ENCODE measurements at regions of chr18 and their contacts with region 1.

Region 1: GRCh38 chr18:48445540-48445939 is 36.4 kb upstream of the ZBTB7C start:
- H3K4me3 ChIP-seq: no peak overlapping the region
- H3K27ac ChIP-seq: no peak overlapping the region
- H3K4me1 ChIP-seq: no peaks in the 10 kb centered on the region; the same call in 1 of the 2 replicates
- CTCF ChIP-seq: peak; percentile 71

Region 2: GRCh38 chr18:48022531-48023329 is 422.8 kb before region 1 on chr18:
- CTCF ChIA-PET with region 1: interaction called, 206 read pairs
- POLR2A ChIA-PET with region 1: no interaction called
- H3K4me3 ChIP-seq: no peak overlapping the region
- H3K27ac ChIP-seq: 0 out of 2 replicates have a peak overlapping the region, but pooled peaks have one; percentile 4
- H3K4me1 ChIP-seq: peaks cover 8% of the 10 kb centered on the region; the same call in 1 of the 2 replicates
- CTCF ChIP-seq: peak; percentile 68; the same call in 1 of the 2 replicates

Region 3: DNA sequence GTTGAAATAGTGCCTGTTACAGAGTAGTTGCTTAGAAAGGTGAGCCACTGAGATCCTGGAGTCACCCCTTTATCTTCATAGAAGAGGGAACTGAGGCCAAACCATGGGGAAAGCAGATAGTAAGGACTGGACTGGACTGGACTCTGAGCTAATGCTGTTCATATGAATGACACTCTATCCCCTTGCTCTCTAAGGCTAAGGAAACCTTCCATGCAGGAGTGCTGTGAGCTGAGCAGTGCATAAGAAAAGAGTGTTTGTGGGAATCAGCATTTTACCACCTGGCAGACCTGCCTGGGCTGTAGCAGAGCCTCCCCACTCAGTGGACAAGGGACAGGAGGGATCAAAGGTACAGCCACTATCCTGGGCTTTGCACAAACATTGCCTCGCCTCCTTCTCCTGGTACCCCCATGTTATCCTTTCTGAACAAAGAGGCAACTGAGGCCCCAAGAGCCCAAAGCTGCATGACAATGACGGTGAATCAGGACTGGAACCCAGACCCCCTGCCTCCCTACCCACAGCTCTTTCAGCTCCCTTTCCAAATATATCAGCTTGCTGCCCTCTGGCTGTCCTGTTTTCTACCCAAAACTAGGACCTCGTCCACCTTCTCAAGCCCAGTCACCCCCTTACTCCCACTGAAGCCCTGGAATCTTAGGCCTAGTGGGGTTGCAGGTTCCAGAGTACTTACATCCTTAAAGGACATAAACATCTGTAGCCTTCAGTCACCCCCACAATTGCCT is 264.3 kb before region 1 on chr18:
- CTCF ChIA-PET with region 1: interaction called, 11 read pairs
- POLR2A ChIA-PET with region 1: no interaction called
- H3K4me3 ChIP-seq: no peak overlapping the region
- H3K27ac ChIP-seq: no peak overlapping the region
- H3K4me1 ChIP-seq: 0 out of 2 replicates have a peak, but pooled peaks cover 7% of the 10 kb centered on the region
- CTCF ChIP-seq: no peak

Region 4: GRCh38 chr18:48230467-48231113 is 214.9 kb before region 1 on chr18:
- CTCF ChIA-PET with region 1: interaction called, 104 read pairs
- POLR2A ChIA-PET with region 1: no interaction called
- H3K4me3 ChIP-seq: no peak overlapping the region
- H3K27ac ChIP-seq: no peak overlapping the region
- H3K4me1 ChIP-seq: peaks cover 9% of the 10 kb centered on the region
- CTCF ChIP-seq: peak; percentile 81

Region 5: DNA sequence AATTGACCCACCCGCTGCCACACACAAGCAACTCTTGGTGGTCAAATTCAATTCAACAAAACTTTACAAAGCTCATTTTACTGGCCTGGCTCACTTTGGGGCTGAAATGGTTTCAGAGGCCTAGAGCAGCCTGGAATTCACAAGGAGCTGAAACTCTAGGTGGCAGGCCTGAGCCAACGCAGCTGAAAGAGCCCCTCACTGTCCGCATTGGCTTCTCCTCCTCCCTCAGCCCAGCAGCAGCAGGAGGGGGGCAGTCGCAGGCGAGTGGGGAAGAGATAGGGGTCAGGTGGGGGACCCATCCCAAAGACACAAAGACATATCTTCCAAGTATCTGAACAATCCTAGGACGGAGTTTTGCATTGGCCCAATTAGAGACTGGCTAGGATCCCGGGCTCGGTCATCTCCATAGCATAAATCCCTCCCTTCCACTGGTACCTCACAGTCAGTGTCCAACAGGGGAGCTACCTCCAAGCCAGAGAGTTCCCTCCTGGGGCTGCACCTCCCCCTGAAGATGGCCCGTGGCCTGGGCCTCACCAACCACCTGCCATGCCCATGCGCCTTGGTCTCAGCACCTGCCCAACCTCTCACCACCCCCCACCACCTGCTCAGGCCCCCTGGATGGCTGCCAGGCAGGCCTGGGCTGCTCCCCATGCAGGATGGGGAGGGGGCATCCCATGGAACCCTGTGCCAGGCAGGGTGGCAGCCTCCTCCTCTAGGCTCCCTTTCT is 149.8 kb before region 1 on chr18:
- CTCF ChIA-PET with region 1: interaction called, 17 read pairs
- POLR2A ChIA-PET with region 1: no interaction called
- H3K4me3 ChIP-seq: no peak overlapping the region
- H3K27ac ChIP-seq: no peak overlapping the region
- H3K4me1 ChIP-seq: no peaks in the 10 kb centered on the region
- CTCF ChIP-seq: no peak

Region 6: GRCh38 chr18:48419277-48420022 is 26.1 kb before region 1 on chr18:
- CTCF ChIA-PET with region 1: interaction called, 15 read pairs
- POLR2A ChIA-PET with region 1: no interaction called
- H3K4me3 ChIP-seq: no peak overlapping the region
- H3K27ac ChIP-seq: no peak overlapping the region
- H3K4me1 ChIP-seq: peaks cover 2% of the 10 kb centered on the region; the same call in 1 of the 2 replicates
- CTCF ChIP-seq: no peak

Region 7: GRCh38 chr18:48455555-48456478 is 10.3 kb after region 1 on chr18:
- CTCF ChIA-PET with region 1: interaction called, 124 read pairs
- POLR2A ChIA-PET with region 1: no interaction called
- H3K4me3 ChIP-seq: no peak overlapping the region
- H3K27ac ChIP-seq: no peak overlapping the region
- H3K4me1 ChIP-seq: no peaks in the 10 kb centered on the region
- CTCF ChIP-seq: no peak

Region 8: GRCh38 chr18:48767090-48767690 is 321.6 kb after region 1 on chr18:
- CTCF ChIA-PET with region 1: no interaction called
- POLR2A ChIA-PET with region 1: no interaction called
- H3K4me3 ChIP-seq: no peak overlapping the region
- H3K27ac ChIP-seq: no peak overlapping the region
- H3K4me1 ChIP-seq: no peaks in the 10 kb centered on the region
- CTCF ChIP-seq: no peak